ENCODE measurements at regions of chr2 and their contacts with region 1.

Region 1: DNA sequence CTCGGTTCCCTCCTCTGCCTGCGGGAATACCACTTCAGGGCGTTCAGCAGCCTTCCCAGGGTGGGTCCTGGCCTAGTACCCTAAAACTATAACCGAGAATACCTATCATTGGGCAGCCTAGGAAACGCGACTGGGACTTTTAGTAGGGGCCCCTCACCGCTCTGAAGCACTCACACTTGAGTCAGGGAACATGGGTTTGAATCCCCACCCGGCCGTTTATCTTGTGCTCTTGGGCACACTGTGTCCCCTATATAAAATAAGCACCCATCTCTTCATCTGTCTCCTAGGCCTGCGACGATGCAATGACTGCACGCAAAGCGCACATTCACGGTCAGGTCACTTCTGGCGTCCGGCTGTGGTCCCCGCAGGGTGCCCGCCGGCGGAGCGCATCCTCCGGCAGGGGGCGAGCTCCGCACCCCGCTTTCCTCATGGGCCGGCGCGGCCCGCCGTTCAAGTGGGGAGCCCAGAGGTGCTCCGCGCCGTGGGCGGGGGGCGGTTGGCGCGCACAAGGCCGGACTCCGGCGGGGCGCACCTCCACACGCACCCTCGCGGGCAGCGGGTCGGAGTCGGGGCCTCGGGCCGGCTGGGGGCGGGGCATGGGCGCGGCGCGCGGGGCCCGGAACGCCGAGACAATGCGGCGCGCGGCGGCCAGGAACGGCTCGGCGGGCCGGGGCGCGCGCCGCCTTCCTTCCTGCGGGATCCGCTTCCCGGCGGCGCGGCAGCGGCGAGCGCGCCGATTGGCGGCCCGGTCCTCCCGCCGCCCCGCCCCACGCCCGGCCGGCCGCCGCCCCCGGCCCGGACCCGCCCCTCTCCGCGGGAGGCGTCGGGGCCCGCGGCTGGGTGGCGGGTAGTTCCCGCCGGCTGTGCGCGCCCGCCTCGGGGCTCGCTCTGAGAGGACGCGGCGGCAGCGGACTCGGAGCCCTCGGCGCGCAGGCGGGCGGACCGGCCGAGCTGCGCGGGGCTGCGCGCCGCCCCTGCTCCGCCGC is at the start of gene ASAP2:
- DNase-seq: peak; percentile 74 to 89 (median 77)
- ATAC-seq: peak; percentile 63 to 85 (median 82)
- H3K4me3 ChIP-seq: peak within 1 kb of the TSS; percentile 60 to 99 (median 86)
- H3K27ac ChIP-seq: peak within 1 kb of the TSS; percentile 56 to 94 (median 88)
- H3K4me1 ChIP-seq: peaks cover 0 to 40% (median 18%) of the 10 kb centered on the region in 12 donors
- H3K27me3 ChIP-seq: peaks cover 0 to 12% (median 0%) of the 10 kb centered on the region in 9 donors
- CTCF ChIP-seq: peak; percentile 65 to 94 (median 82)
- POLR2A ChIP-seq: no peak
- total RNA-seq, gene ASAP2: 7.4 to 17.0 (median 12.9) TPM

Region 2: GRCh38 chr2:9178904-9179571 is 27.2 kb before region 1 on chr2:
- intact Hi-C with region 1: no loop called
- DNase-seq: peak in 4 of 5 donors; percentile 36 to 78 (median 50)
- ATAC-seq: peak; percentile 73 to 85 (median 77)
- H3K4me3 ChIP-seq: no peak overlapping the region
- H3K27ac ChIP-seq: peak overlapping the region; percentile 42 to 91 (median 76)
- H3K4me1 ChIP-seq: peaks cover 0 to 39% (median 19%) of the 10 kb centered on the region in 12 donors
- H3K27me3 ChIP-seq: no peaks in the 10 kb centered on the region
- CTCF ChIP-seq: no peak
- POLR2A ChIP-seq: no peak

Region 3: GRCh38 chr2:9287400-9288043 is 81.3 kb after region 1 on chr2:
- intact Hi-C with region 1: no loop called
- DNase-seq: no peak
- ATAC-seq: no peak
- H3K4me3 ChIP-seq: no peak overlapping the region
- H3K27ac ChIP-seq: no peak overlapping the region
- H3K4me1 ChIP-seq: peaks cover 0 to 20% (median 8%) of the 10 kb centered on the region in 12 donors
- H3K27me3 ChIP-seq: no peaks in the 10 kb centered on the region
- CTCF ChIP-seq: no peak
- POLR2A ChIP-seq: no peak

Region 4: DNA sequence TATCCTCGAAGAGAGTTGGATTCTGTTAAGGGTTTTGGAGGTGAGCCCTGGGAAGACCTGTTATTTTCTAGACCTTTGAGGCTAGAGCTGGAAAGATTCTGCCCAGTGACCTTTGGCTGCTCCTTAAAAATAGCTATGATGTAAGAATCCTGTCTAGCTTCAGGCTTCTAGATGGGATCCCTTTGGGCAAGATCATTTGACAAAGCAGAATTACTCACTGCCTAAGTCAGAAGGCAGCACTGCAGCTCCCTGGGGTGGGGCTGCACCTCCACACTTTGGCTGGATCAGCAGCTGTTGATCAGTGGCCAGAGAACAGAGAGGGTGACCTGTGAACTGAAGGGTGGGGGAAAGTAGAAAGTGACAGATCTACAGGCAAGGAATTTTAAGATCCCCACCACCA is 104.1 kb after region 1 on chr2:
- intact Hi-C with region 1: loop called in 2 of 10 experiments (anchors 5 kb)
- DNase-seq: peak; percentile 60 to 84 (median 71)
- ATAC-seq: peak; percentile 73 to 94 (median 91)
- H3K4me3 ChIP-seq: no peak overlapping the region
- H3K27ac ChIP-seq: peak overlapping the region; percentile 35 to 88 (median 80)
- H3K4me1 ChIP-seq: peaks cover 9 to 52% (median 41%) of the 10 kb centered on the region in 12 donors
- H3K27me3 ChIP-seq: no peaks in the 10 kb centered on the region
- CTCF ChIP-seq: no peak
- POLR2A ChIP-seq: no peak

Region 5: GRCh38 chr2:9318461-9319337 is 112.4 kb after region 1 on chr2:
- intact Hi-C with region 1: loop called in 2 of 10 experiments (anchors 5 kb)
- DNase-seq: peak; percentile 77 to 85 (median 82)
- ATAC-seq: peak; percentile 56 to 90 (median 82)
- H3K4me3 ChIP-seq: peak overlapping the region in 3 of 12 donors; percentile 13 to 21 (median 19)
- H3K27ac ChIP-seq: peak overlapping the region in 11 of 12 donors; percentile 55 to 85 (median 69)
- H3K4me1 ChIP-seq: peaks cover 3 to 29% (median 21%) of the 10 kb centered on the region in 12 donors
- H3K27me3 ChIP-seq: no peaks in the 10 kb centered on the region
- CTCF ChIP-seq: no peak
- POLR2A ChIP-seq: no peak

Region 6: DNA sequence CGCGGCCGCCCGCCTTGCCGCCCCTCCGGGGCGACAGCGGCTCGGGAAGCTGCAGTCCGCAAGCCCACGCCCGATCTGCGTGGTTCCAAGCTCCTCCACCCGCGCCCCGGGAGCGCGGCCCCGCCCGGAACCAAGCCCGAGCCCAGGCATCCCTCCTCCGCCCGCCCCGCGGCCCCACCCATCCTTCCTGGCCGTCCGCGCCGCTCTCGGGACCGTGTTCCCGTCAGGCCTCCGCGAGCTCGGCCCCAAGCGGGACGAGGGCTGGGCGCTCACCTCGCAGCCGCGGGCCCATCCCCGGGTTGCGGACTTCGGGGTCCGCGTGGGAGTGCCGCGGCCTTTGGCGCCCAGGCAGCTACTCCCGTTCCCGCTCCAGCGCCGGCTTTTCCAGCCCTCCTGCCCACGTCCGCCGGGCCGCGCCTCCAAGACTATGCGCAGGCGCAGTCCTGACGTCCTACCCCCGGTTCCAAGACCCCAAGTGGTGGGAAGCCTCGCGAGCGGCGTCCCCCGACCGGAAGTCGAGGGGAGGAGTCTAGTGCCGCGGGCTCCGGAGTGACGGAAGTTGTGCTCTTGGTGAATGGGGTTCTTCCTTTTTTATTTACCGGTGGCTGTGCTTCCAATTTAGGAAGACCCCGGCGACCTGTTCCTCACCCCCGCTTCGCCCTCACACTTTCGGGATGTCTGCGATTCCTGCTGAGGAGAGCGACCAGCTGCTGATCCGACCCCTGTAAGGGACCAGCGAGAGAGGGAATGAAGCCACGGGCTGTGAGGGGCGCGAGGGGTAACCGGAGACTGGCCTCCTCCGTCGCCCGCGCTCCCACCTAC is 217.1 kb after region 1 on chr2 and contains the starts of genes CPSF3 and ITGB1BP1:
- intact Hi-C with region 1: loop called in 4 of 10 experiments (anchors 2 to 5 kb)
- DNase-seq: peak; percentile 98 to 99 (median 98)
- ATAC-seq: peak; percentile 96 to 97 (median 96)
- H3K4me3 ChIP-seq: peak within 1 kb of the TSS; percentile 54 to 98 (median 94)
- H3K27ac ChIP-seq: peak within 1 kb of the TSS; percentile 90 to 98 (median 94)
- H3K4me1 ChIP-seq: peaks cover 0 to 57% (median 34%) of the 10 kb centered on the region in 12 donors
- H3K27me3 ChIP-seq: no peaks in the 10 kb centered on the region
- CTCF ChIP-seq: peak in 2 of 12 donors; percentile 25 to 35
- POLR2A ChIP-seq: peak in 1 of 2 donors; percentile 75
- total RNA-seq, gene CPSF3: 13.8 to 27.5 (median 18.3) TPM
- total RNA-seq, gene ITGB1BP1: 26.5 to 163 (median 104) TPM

Region 7: GRCh38 chr2:9460441-9461017 is 254.3 kb after region 1 on chr2:
- intact Hi-C with region 1: no loop called
- DNase-seq: no peak
- ATAC-seq: no peak
- H3K4me3 ChIP-seq: no peak overlapping the region
- H3K27ac ChIP-seq: no peak overlapping the region
- H3K4me1 ChIP-seq: peaks cover 0 to 7% (median 0%) of the 10 kb centered on the region in 12 donors
- H3K27me3 ChIP-seq: no peaks in the 10 kb centered on the region
- CTCF ChIP-seq: no peak
- POLR2A ChIP-seq: no peak

Region 8: GRCh38 chr2:10170256-10170655 is 964.0 kb after region 1 on chr2:
- intact Hi-C with region 1: no loop called
- DNase-seq: peak in 1 of 5 donors; percentile 19
- ATAC-seq: peak in 1 of 4 donors; percentile 12
- H3K4me3 ChIP-seq: no peak overlapping the region
- H3K27ac ChIP-seq: no peak overlapping the region
- H3K4me1 ChIP-seq: no peaks in the 10 kb centered on the region
- H3K27me3 ChIP-seq: no peaks in the 10 kb centered on the region
- CTCF ChIP-seq: no peak
- POLR2A ChIP-seq: no peak

Measured in heart left ventricle (tissue), 16 donors.